CD4-positive, alpha-beta memory T cell (primary cell): ENCODE measurements at regions of chr1 and their contacts with region 1.

Region 1: DNA sequence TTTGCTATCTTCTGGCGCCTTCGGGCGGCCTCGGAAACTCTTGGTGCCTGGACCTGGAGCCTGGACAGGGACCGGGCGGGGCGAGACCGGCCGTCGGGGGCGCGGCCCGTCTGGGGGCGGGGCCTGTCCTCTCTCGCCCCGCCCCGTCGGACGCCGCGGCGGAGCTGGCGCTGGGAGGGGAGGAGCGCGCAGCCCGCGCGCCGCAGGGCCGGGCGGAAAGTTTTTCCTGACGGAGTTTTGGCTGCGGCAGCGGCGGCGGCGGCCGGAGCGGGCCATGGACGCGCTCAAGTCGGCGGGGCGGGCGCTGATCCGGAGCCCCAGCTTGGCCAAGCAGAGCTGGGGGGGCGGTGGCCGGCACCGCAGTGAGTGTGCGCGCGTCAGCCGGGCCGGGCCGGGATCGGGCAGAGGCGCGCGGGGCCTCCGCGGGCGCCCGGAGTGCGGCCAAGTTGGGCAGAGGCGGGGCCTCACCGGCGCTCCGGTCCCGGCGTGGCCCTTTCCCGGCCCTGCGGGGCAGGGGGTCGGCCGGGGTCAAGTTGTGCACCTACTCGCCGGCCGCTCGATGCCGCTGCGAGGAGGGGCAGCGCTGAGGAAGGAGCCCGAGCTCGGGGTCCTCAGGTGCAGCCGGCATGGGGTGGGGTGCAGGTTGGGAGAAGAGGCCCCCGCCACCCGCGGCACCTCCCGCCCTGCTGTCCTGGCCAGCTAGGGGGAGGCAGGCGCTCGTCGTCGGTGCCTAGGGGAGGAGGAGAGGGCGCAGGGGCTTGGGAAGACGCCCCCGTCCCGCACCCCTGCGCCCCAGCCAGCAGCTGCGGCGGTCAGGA is at the start of gene LDLRAP1:
- DNase-seq: peak; percentile 47 to 70 (median 48)
- H3K4me3 ChIP-seq: peak within 1 kb of the TSS; percentile 44 to 58
- H3K4me3 Mint-ChIP-seq: peak within 1 kb of the TSS; percentile 86 to 96 (median 93)
- H3K27ac ChIP-seq: peak within 1 kb of the TSS; percentile 68
- H3K27ac Mint-ChIP-seq: peak within 1 kb of the TSS; percentile 77 to 93 (median 88)
- H3K4me1 ChIP-seq: peaks cover 40% of the 10 kb centered on the region
- H3K4me1 Mint-ChIP-seq: peaks cover 28 to 47% (median 41%) of the 10 kb centered on the region in 4 donors
- H3K27me3 ChIP-seq: no peaks in the 10 kb centered on the region
- H3K27me3 Mint-ChIP-seq: no peaks in the 10 kb centered on the region
- total RNA-seq, gene LDLRAP1: 201 to 210 TPM

Region 2: DNA sequence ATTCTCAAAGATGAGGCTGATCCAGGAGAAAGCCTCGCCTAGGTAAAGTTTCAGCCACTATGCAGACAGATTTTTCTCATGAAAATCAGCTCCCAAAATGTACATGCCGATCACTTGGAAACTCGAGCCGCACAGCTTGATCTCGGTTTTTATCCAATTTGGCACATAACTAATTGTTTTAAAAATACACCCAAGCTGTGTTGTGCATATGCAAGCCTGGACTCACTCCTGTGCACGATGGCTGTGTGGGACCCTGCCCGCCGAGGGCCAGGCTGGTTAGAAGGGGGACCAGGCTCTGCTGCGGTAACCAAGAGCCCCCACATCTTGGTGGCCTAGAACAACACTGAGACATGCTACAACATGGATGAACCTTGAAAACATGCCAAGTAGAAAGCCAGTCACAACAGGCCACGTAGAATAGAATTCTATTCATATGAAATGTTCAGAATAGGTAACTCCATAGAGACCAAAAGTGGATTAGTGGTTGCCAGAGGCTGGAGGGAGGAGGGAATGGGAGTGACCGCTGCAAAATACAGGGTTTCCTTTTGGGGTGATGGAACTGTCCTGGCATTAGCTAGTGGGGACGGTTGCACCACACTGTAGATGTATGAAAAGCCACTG is 16.3 kb before region 1 on chr1:
- CTCF ChIA-PET with region 1: no interaction called
- POLR2A ChIA-PET with region 1: no interaction called
- intact Hi-C with region 1: no loop called
- DNase-seq: no peak
- H3K4me3 ChIP-seq: no peak overlapping the region
- H3K4me3 Mint-ChIP-seq: no peak overlapping the region
- H3K27ac ChIP-seq: no peak overlapping the region
- H3K27ac Mint-ChIP-seq: peak overlapping the region in 1 of 7 donors; percentile 42
- H3K4me1 ChIP-seq: no peaks in the 10 kb centered on the region
- H3K4me1 Mint-ChIP-seq: peaks cover 0 to 6% (median 3%) of the 10 kb centered on the region in 4 donors
- H3K27me3 ChIP-seq: no peaks in the 10 kb centered on the region
- H3K27me3 Mint-ChIP-seq: no peaks in the 10 kb centered on the region

Region 3: GRCh38 chr1:25566730-25567341 is 23.2 kb after region 1 on chr1:
- CTCF ChIA-PET with region 1: interaction called, 20 read pairs
- POLR2A ChIA-PET with region 1: interaction called, 615 read pairs
- intact Hi-C with region 1: loop called (anchors 1 kb)
- DNase-seq: peak in 1 of 5 donors; percentile 46
- H3K4me3 ChIP-seq: no peak overlapping the region
- H3K4me3 Mint-ChIP-seq: peak overlapping the region in 5 of 8 donors; percentile 13 to 88 (median 68)
- H3K27ac ChIP-seq: no peak overlapping the region
- H3K27ac Mint-ChIP-seq: peak overlapping the region in 6 of 7 donors; percentile 32 to 95 (median 73)
- H3K4me1 ChIP-seq: peaks cover 76% of the 10 kb centered on the region
- H3K4me1 Mint-ChIP-seq: peaks cover 35 to 93% (median 60%) of the 10 kb centered on the region in 4 donors
- H3K27me3 ChIP-seq: no peaks in the 10 kb centered on the region
- H3K27me3 Mint-ChIP-seq: no peaks in the 10 kb centered on the region

Region 4: DNA sequence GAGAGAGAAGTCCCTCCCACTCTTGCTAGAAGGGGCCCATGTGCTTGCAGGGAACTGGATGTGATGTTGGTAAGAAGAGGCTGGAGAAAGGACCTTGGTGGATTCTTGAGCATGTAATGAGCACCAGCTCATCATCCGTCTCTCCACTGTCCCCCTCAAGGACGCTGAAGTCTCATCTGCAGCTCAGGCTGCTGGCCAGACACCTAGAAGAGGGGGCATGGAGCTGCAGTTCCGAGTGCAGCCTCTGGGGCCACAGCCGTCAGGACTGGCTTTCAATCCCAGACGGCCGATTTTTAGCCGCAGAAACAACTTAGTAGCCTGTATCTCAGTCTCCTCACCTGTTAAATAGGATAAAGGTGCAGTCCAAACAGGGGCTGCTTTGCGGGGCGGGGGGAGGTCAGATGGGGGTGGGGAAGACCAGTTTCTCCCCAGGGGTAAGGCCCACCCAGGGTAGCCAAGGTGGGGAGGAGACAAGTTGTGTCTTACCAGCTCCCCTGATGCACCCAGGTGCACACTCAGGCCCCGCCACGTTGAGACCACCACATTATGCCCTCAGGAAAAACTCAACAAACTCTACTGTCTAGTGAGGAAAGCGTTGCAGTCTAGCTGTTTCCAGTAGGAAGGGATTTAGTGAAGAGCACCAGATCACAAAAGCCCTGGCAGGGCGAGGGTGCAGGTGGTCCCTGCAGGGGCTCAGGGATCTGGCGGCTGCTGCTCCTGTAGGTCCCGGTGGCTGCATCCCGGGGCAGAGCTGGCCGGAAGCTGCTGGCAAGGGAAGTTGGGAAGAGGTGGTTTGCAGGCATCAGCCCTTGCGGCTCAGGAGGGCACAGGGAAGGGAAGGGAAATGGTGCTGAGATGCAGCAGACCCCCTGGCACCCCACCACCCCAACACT is 29.3 kb after region 1 on chr1:
- CTCF ChIA-PET with region 1: interaction called, 20 read pairs
- POLR2A ChIA-PET with region 1: interaction called, 615 read pairs
- intact Hi-C with region 1: no loop called
- DNase-seq: peak in 4 of 5 donors; percentile 29 to 41 (median 36)
- H3K4me3 ChIP-seq: no peak overlapping the region
- H3K4me3 Mint-ChIP-seq: no peak overlapping the region
- H3K27ac ChIP-seq: no peak overlapping the region
- H3K27ac Mint-ChIP-seq: peak overlapping the region in 6 of 7 donors; percentile 27 to 77 (median 68)
- H3K4me1 ChIP-seq: peaks cover 31% of the 10 kb centered on the region
- H3K4me1 Mint-ChIP-seq: peaks cover 10 to 57% (median 30%) of the 10 kb centered on the region in 4 donors
- H3K27me3 ChIP-seq: no peaks in the 10 kb centered on the region
- H3K27me3 Mint-ChIP-seq: no peaks in the 10 kb centered on the region

Region 5: GRCh38 chr1:25780311-25781129 is 236.9 kb after region 1 on chr1:
- CTCF ChIA-PET with region 1: no interaction called
- POLR2A ChIA-PET with region 1: no interaction called
- intact Hi-C with region 1: no loop called
- DNase-seq: no peak
- H3K4me3 ChIP-seq: no peak overlapping the region
- H3K4me3 Mint-ChIP-seq: no peak overlapping the region
- H3K27ac ChIP-seq: no peak overlapping the region
- H3K27ac Mint-ChIP-seq: no peak overlapping the region
- H3K4me1 ChIP-seq: peaks cover 12% of the 10 kb centered on the region
- H3K4me1 Mint-ChIP-seq: peaks cover 4 to 19% (median 6%) of the 10 kb centered on the region in 4 donors
- H3K27me3 ChIP-seq: no peaks in the 10 kb centered on the region
- H3K27me3 Mint-ChIP-seq: no peaks in the 10 kb centered on the region